A549 (cell line): ENCODE measurements at regions of chr9 and their contacts with region 1.

Region 1: DNA sequence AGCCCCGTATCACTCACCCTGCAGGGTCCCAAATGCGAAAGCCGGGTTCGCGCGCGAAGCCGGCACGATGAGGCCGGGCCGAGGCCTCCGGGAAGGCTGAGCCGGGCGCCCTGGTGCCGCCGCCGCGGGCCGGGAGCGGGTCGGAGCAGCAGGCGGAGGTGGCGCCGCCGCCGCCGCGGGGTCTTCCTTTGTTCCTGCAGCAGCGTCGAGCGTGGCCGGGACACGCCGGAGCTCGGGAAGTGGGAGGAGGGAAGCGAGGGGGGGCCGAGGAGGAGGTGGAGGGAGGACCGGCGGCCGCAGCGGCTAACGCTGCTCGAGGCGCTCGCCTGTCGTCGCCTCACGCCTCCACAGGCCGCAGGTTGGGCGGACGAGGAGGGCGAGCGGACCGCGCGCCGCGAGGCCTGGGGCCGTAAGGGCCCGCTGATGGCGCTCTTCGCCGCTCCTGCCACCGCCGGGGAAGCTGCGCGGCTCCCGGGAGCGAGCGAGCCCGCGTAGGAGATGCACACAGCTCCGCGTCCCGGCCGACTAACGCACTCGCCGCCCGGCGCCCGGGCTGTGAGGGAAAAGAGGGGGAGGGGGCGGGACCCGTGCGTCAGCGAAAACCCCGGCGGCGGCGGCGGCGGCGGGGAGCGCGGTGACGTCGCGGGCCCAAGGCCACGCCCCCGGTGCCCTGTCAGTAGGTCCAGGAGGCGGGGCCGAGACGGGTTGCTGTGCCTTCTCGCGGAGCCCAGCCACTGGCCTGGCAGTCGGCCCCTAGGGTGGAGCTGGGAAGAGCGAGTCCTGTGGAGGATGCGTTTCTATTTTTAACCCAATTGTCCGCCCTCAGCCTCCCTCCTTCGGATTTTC is at the start of gene ZFAND5:
- DNase-seq: peak; percentile 94 to 98
- ATAC-seq: peak; percentile 82 to 89
- H3K4me3 ChIP-seq: peak within 1 kb of the TSS; percentile 91
- H3K27ac ChIP-seq: peak within 1 kb of the TSS; percentile 99
- H3K4me1 ChIP-seq: peaks cover 26% of the 10 kb centered on the region
- CTCF ChIP-seq: peak; percentile 21; the same call in 1 of the 3 replicates
- EP300 ChIP-seq: peak in 1 of 2 experiments; percentile 38; a peak in 2 of 5 replicates
- POLR2A ChIP-seq: peak; percentile 95
- RAD21 ChIP-seq: peak; percentile 26 to 68; a peak in 4 of 5 replicates
- polyA plus RNA-seq, gene ZFAND5: 234 and 315 TPM in 2 replicates

Region 2: GRCh38 chr9:72292256-72292682 is 72.6 kb before region 1 on chr9:
- CTCF ChIA-PET with region 1: interaction called, 8 read pairs
- POLR2A ChIA-PET with region 1: interaction called, 119 read pairs
- DNase-seq: peak; percentile 68 to 81
- ATAC-seq: peak; percentile 61 to 65
- H3K4me3 ChIP-seq: peak overlapping the region; percentile 5; the same call in 1 of the 3 replicates
- H3K27ac ChIP-seq: peak overlapping the region; percentile 95 to 97
- H3K4me1 ChIP-seq: peaks cover 39% of the 10 kb centered on the region
- CTCF ChIP-seq: peak; percentile 80
- EP300 ChIP-seq: no peak
- POLR2A ChIP-seq: no peak
- RAD21 ChIP-seq: peak; percentile 79 to 87

Region 3: DNA sequence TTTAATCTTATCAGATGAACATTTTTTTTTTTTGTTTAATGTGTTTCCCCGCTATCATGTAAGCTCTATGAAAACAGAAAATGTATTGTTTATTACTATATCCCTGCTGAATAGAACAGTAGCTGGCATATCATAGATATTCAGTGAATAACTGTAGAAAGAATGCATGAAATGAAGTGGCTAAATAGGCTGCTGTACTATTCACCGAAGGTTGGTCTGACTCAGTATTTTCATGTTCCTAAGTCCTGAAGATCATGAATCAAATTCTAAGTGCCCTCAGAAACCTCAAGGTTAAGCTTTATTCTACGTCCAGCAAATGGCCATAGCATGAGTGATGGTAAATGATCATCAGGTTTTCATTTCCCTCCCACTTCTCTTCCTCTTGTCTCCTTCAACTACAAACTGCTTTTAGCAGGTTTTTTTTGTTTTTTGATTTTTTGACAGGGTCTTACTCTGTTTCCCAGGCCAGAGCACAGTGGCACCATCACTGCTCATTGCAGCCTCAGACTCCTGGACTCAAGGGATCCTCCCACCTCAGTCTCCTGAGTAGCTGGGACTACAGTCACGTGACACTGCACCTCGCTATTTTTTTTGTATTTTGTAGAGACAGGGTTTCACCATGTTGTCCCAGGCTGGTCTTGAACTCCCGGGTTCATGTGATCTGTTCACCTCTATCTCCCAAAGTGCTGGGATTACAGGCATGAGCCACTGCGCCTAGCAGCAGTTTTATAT is 19.2 kb after region 1 on chr9:
- CTCF ChIA-PET with region 1: interaction called, 15 read pairs
- POLR2A ChIA-PET with region 1: interaction called, 33 read pairs
- DNase-seq: peak in 1 of 2 experiments; percentile 22
- ATAC-seq: peak; percentile 68 to 87; a peak in 4 of 6 replicates
- H3K4me3 ChIP-seq: no peak overlapping the region
- H3K27ac ChIP-seq: peak overlapping the region; percentile 40 to 65; a peak in 4 of 6 replicates
- H3K4me1 ChIP-seq: peaks cover 11% of the 10 kb centered on the region; the same call in 2 of the 3 replicates
- CTCF ChIP-seq: no peak
- EP300 ChIP-seq: no peak
- POLR2A ChIP-seq: no peak
- RAD21 ChIP-seq: no peak

Region 4: DNA sequence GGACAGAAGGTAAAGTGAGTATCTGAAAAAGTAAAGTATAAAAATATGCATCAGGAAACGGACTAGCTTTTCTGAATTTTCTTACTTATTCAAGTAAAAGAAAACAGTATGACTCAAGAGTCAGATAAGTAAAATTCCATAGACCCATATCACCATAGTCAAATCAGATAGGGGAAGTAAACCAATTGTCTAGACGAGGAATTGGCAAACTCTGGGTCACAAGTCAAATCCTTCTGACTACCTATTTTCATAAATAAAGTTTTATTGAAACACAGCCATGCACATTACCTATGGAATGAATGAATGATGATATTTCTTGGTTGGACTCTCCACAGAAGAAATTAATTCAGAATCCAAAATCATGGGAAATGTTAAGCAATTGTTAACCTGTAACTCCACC is 97.4 kb after region 1 on chr9:
- CTCF ChIA-PET with region 1: interaction called, 3 read pairs
- POLR2A ChIA-PET with region 1: interaction called, 15 read pairs
- DNase-seq: peak in 1 of 2 experiments; percentile 53
- ATAC-seq: 0 out of 6 replicates have a peak, but pooled peaks of 1 of the 2 experiments have one; percentile 14
- H3K4me3 ChIP-seq: no peak overlapping the region
- H3K27ac ChIP-seq: peak overlapping the region; percentile 90 to 95
- H3K4me1 ChIP-seq: peaks cover 76% of the 10 kb centered on the region
- CTCF ChIP-seq: no peak
- EP300 ChIP-seq: no peak
- POLR2A ChIP-seq: no peak
- RAD21 ChIP-seq: no peak

Region 5: GRCh38 chr9:72540348-72540873 is 175.5 kb after region 1 on chr9:
- CTCF ChIA-PET with region 1: no interaction called
- POLR2A ChIA-PET with region 1: interaction called, 25 read pairs
- DNase-seq: peak in 1 of 2 experiments; percentile 75
- ATAC-seq: peak; percentile 69; a peak in 4 of 6 replicates
- H3K4me3 ChIP-seq: no peak overlapping the region
- H3K27ac ChIP-seq: peak overlapping the region; percentile 51 to 70
- H3K4me1 ChIP-seq: peaks cover 34% of the 10 kb centered on the region
- CTCF ChIP-seq: no peak
- EP300 ChIP-seq: peak in 1 of 2 experiments; percentile 27; a peak in 1 of 5 replicates
- POLR2A ChIP-seq: no peak
- RAD21 ChIP-seq: no peak

Region 6: DNA sequence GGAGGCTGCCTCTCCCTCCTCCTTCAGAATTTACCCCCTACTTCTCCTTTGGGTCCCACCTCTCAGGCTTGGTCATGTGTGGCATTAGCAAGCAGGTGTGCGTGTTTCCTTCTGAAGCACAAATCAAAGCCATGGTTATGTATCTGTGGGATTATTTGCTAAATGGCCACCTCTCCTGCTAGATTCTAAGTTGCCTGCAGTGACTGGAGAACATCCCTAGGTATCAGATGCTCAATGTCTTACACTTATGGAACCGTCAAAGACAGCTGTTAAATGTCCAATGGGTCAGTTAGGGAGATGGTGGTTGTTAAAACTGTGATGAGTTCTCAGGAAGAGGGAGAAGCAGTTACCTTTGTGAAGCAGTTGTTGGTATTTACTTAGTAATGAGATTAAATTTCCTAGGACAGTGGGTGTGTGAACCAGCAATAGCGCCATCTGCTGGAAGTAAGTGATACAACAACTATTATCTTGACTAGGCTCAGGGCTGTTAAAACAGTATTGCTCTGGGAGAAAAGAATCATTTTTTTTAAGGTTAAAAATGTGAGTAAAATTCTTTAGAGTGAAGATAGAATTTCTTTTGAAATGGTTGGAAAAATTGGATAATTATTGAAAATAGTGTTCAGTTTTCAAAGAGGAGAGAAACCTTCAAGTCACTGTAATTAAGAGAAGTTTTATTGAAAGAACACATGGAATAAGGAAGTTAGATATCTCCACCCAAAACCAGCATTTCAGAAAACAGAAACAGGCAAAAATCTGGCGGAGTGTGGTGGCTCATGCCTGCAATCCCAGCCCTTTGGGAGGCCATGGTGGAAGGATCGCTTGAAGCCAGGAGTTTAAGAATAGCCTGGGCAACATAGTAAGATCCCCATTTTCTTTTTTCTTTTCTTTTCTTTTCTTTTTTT is 227.9 kb after region 1 on chr9:
- CTCF ChIA-PET with region 1: interaction called, 15 read pairs
- POLR2A ChIA-PET with region 1: interaction called, 65 read pairs
- DNase-seq: peak; percentile 38 to 78
- ATAC-seq: peak; percentile 81 to 88
- H3K4me3 ChIP-seq: no peak overlapping the region
- H3K27ac ChIP-seq: peak overlapping the region; percentile 67 to 82
- H3K4me1 ChIP-seq: peaks cover 26% of the 10 kb centered on the region
- CTCF ChIP-seq: peak; percentile 92
- EP300 ChIP-seq: no peak
- POLR2A ChIP-seq: no peak
- RAD21 ChIP-seq: peak; percentile 90 to 91

Region 7: GRCh38 chr9:72623156-72623555 is 258.3 kb after region 1 on chr9:
- CTCF ChIA-PET with region 1: no interaction called
- POLR2A ChIA-PET with region 1: no interaction called
- DNase-seq: no peak
- ATAC-seq: no peak
- H3K4me3 ChIP-seq: no peak overlapping the region
- H3K27ac ChIP-seq: no peak overlapping the region
- H3K4me1 ChIP-seq: no peaks in the 10 kb centered on the region
- CTCF ChIP-seq: no peak
- EP300 ChIP-seq: no peak
- POLR2A ChIP-seq: no peak
- RAD21 ChIP-seq: no peak